Activated CD8-positive, alpha-beta T cell treated with anti-CD3 and anti-CD28 coated beads for 36 hours (primary cell): ENCODE measurements at regions of chr17 and their contacts with region 1.

Region 1: DNA sequence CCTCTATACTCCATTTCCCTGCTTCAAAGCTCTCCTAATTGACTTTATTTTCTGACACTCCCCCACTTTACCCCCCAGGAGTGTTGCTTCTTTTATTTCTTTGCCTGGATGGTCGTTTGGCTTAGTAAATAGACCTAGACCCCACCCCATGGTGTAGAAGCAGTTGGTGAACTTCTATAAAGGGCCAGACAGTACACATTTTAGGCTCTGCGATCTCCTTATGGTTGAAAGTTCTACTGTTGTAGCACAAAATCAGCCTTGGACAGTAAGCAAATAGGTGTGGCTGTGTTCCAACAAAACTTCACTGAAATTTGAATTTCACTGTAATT is 31.9 kb downstream of the ZNF287 start:
- DNase-seq: no peak
- ATAC-seq: no peak
- H3K4me3 Mint-ChIP-seq: peak overlapping the region; percentile 94
- H3K27ac Mint-ChIP-seq: no peak overlapping the region
- H3K4me1 Mint-ChIP-seq: peaks cover 10% of the 10 kb centered on the region
- H3K27me3 Mint-ChIP-seq: no peaks in the 10 kb centered on the region
- CTCF ChIP-seq: no peak

Region 2: GRCh38 chr17:16491703-16492612 is 45.1 kb before region 1 on chr17 and contains the start of gene LRRC75A:
- CTCF ChIA-PET with region 1: no interaction called
- POLR2A ChIA-PET with region 1: no interaction called
- intact Hi-C with region 1: no loop called
- DNase-seq: peak; percentile 56
- ATAC-seq: peak; percentile 87
- H3K4me3 Mint-ChIP-seq: peak within 1 kb of the TSS; percentile 70
- H3K27ac Mint-ChIP-seq: no peak within 1 kb of the TSS
- H3K4me1 Mint-ChIP-seq: peaks cover 13% of the 10 kb centered on the region
- H3K27me3 Mint-ChIP-seq: peaks cover 4% of the 10 kb centered on the region
- CTCF ChIP-seq: no peak
- total RNA-seq, gene LRRC75A: 1.8 to 2.3 TPM

Region 3: GRCh38 chr17:16568541-16569357 is 31.7 kb after region 1 on chr17 and contains the start of gene ZNF287:
- CTCF ChIA-PET with region 1: interaction called, 11 read pairs
- POLR2A ChIA-PET with region 1: interaction called, 3 read pairs
- intact Hi-C with region 1: no loop called
- DNase-seq: peak; percentile 95
- ATAC-seq: peak; percentile 98
- H3K4me3 Mint-ChIP-seq: peak within 1 kb of the TSS; percentile 78
- H3K27ac Mint-ChIP-seq: peak within 1 kb of the TSS; percentile 65
- H3K4me1 Mint-ChIP-seq: peaks cover 16% of the 10 kb centered on the region
- H3K27me3 Mint-ChIP-seq: peaks cover 3% of the 10 kb centered on the region
- CTCF ChIP-seq: no peak
- total RNA-seq, gene ZNF287: 6.4 to 9.5 TPM

Region 4: DNA sequence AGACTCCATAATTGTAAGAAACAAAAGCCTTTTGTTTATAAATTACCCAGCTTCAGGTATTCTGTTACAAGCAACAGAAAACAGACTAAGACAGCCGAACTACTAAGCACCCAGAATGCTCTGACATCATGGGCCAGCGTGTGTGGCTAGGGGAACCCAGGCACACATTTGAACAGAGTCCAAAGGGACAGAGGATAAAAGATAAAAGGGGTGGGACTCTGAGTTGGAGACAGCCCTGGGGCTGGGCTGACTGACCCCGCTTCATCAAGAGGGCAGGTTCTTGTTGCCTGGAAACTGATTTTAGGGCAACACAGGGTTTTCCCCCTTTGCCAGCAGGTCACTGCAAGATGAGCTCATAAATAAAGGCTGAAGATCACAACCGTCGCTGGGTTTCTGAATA is 62.4 kb after region 1 on chr17:
- CTCF ChIA-PET with region 1: no interaction called
- POLR2A ChIA-PET with region 1: no interaction called
- intact Hi-C with region 1: no loop called
- DNase-seq: no peak
- ATAC-seq: no peak
- H3K4me3 Mint-ChIP-seq: no peak overlapping the region
- H3K27ac Mint-ChIP-seq: no peak overlapping the region
- H3K4me1 Mint-ChIP-seq: no peaks in the 10 kb centered on the region
- H3K27me3 Mint-ChIP-seq: peaks cover 4% of the 10 kb centered on the region
- CTCF ChIP-seq: no peak